ENCODE measurements at regions of chr10 and their contacts with region 1.

Region 1: DNA sequence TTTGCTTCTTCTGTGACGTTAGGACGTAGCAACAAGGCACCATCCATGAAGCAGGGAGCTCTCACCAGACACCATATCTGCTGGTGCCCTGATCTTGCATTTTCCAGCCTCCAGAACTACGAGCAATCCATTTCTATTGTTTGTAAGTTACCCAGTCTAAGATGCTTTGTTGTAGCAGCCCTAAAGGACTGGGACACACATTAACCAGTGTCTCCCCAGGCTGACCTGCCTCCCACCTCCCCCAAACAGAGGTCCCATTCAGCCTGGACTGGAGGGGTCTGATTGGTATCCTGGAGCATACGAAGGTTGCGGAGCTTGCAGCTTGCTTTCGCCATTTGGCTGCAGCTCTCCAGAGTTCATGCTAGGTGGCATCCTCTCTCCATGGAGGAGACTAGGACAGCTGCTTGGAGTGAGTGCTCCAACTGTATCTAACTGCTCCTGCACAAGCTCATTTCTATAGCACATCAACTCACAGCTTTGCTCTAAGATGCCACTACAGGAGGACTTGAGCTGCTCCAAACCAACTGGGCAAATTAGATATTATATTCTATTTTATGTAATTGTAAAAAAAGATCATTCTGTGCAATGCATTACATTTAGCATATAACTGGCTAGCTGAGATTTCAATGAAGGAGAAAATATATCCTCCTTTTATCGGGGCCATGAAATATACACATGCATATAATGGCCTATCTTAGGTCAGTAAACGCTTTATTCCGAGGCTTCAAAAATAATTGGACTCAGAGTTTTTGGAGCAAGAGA is 8.0 kb upstream of the GRK5 start:
- DNase-seq: peak; percentile 68
- ATAC-seq: peak; percentile 85
- H3K4me3 Mint-ChIP-seq: no peak overlapping the region
- H3K27ac Mint-ChIP-seq: no peak overlapping the region
- H3K4me1 Mint-ChIP-seq: peaks cover 24% of the 10 kb centered on the region
- H3K27me3 Mint-ChIP-seq: no peaks in the 10 kb centered on the region

Region 2: DNA sequence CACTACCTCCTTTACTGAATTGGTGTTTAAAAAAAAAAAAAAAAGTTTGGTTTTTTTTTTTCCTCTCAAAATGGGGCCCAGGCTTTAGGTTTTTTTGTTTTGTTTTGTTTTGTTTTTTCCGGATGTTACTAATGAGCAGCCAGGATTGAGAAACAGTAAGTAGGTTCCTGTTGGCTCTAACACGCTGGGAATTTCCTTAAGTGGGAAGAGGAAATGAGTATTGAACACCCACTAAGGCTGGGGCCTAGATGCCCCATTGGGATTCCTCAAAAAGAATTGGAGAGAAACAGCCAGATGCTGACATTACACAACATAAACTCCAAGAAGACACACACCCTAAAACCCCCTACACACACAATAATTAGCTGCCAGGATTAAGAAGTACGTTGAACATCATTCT is 272.1 kb before region 1 on chr10:
- CTCF ChIA-PET with region 1: no interaction called
- POLR2A ChIA-PET with region 1: no interaction called
- DNase-seq: no peak
- ATAC-seq: no peak
- H3K4me3 Mint-ChIP-seq: no peak overlapping the region
- H3K27ac Mint-ChIP-seq: no peak overlapping the region
- H3K4me1 Mint-ChIP-seq: peaks cover 10% of the 10 kb centered on the region
- H3K27me3 Mint-ChIP-seq: peaks cover 11% of the 10 kb centered on the region

Region 3: GRCh38 chr10:119049361-119049760 is 150.1 kb before region 1 on chr10:
- CTCF ChIA-PET with region 1: no interaction called
- POLR2A ChIA-PET with region 1: no interaction called
- DNase-seq: no peak
- ATAC-seq: no peak
- H3K4me3 Mint-ChIP-seq: no peak overlapping the region
- H3K27ac Mint-ChIP-seq: no peak overlapping the region
- H3K4me1 Mint-ChIP-seq: peaks cover 3% of the 10 kb centered on the region
- H3K27me3 Mint-ChIP-seq: no peaks in the 10 kb centered on the region

Region 4: GRCh38 chr10:119120413-119120867 is 79.0 kb before region 1 on chr10:
- CTCF ChIA-PET with region 1: no interaction called
- POLR2A ChIA-PET with region 1: no interaction called
- DNase-seq: no peak
- ATAC-seq: peak; percentile 80
- H3K4me3 Mint-ChIP-seq: no peak overlapping the region
- H3K27ac Mint-ChIP-seq: peak overlapping the region; percentile 56
- H3K4me1 Mint-ChIP-seq: peaks cover 12% of the 10 kb centered on the region
- H3K27me3 Mint-ChIP-seq: no peaks in the 10 kb centered on the region

Region 5: GRCh38 chr10:119159332-119159731 is 40.1 kb before region 1 on chr10:
- CTCF ChIA-PET with region 1: no interaction called
- POLR2A ChIA-PET with region 1: no interaction called
- DNase-seq: no peak
- ATAC-seq: no peak
- H3K4me3 Mint-ChIP-seq: no peak overlapping the region
- H3K27ac Mint-ChIP-seq: no peak overlapping the region
- H3K4me1 Mint-ChIP-seq: peaks cover 28% of the 10 kb centered on the region
- H3K27me3 Mint-ChIP-seq: no peaks in the 10 kb centered on the region

Region 6: DNA sequence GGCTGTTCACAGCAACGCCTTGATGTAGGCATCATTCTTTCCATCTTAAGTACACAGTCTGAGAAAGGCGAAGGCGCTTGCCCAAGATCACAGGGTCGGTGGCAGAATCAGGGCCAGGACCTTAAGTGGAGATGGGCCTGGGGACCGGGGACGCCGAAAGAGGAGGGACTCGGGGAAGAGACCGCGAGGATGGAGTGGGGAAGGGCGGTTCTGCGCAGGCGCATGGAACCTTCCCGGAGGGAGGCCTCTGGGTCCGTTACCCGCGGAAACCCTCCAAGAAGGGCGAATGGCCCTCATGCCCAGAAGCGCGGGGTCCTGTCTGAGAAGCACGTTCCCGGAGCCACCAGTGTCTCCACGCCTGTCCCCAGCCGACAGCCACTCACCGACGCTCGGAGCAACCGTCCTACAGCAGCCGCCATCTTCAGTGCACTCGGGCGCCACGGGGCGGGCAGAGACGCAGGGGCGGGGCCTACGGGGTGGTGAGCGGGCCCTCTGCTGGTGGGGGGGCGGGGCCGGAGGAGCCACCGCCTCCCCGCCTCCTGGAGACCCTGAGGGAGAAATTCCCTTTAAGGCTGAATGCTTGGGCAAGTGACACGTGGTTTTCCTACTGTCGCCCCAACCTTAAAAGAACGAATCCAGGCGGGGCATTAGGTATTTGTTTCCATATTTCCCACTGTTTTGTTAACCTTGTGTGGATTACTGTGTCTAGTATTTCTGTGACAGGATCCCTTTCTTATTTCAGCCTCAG is 20.9 kb before region 1 on chr10 and contains the start of gene PRDX3:
- CTCF ChIA-PET with region 1: interaction called, 15 read pairs
- POLR2A ChIA-PET with region 1: interaction called, 6 read pairs
- DNase-seq: peak; percentile 96
- ATAC-seq: peak; percentile 99
- H3K4me3 Mint-ChIP-seq: peak within 1 kb of the TSS; percentile 87
- H3K27ac Mint-ChIP-seq: peak within 1 kb of the TSS; percentile 91
- H3K4me1 Mint-ChIP-seq: peaks cover 31% of the 10 kb centered on the region
- H3K27me3 Mint-ChIP-seq: no peaks in the 10 kb centered on the region
- total RNA-seq, gene PRDX3: 135 to 136 TPM

Region 7: GRCh38 chr10:119416855-119417254 is 217.4 kb after region 1 on chr10:
- CTCF ChIA-PET with region 1: interaction called, 66 read pairs
- POLR2A ChIA-PET with region 1: no interaction called
- DNase-seq: peak; percentile 78
- ATAC-seq: peak; percentile 89
- H3K4me3 Mint-ChIP-seq: no peak overlapping the region
- H3K27ac Mint-ChIP-seq: no peak overlapping the region
- H3K4me1 Mint-ChIP-seq: no peaks in the 10 kb centered on the region
- H3K27me3 Mint-ChIP-seq: no peaks in the 10 kb centered on the region

Region 8: GRCh38 chr10:119445311-119445934 is 246.0 kb after region 1 on chr10:
- CTCF ChIA-PET with region 1: interaction called, 69 read pairs
- POLR2A ChIA-PET with region 1: no interaction called
- DNase-seq: peak; percentile 89
- ATAC-seq: peak; percentile 85
- H3K4me3 Mint-ChIP-seq: no peak overlapping the region
- H3K27ac Mint-ChIP-seq: peak overlapping the region; percentile 77
- H3K4me1 Mint-ChIP-seq: peaks cover 20% of the 10 kb centered on the region
- H3K27me3 Mint-ChIP-seq: no peaks in the 10 kb centered on the region

Region 9: GRCh38 chr10:119542988-119543813 is 343.8 kb after region 1 on chr10:
- CTCF ChIA-PET with region 1: interaction called, 32 read pairs
- POLR2A ChIA-PET with region 1: no interaction called
- DNase-seq: peak; percentile 78
- ATAC-seq: peak; percentile 37
- H3K4me3 Mint-ChIP-seq: peak overlapping the region; percentile 78
- H3K27ac Mint-ChIP-seq: peak overlapping the region; percentile 86
- H3K4me1 Mint-ChIP-seq: peaks cover 38% of the 10 kb centered on the region
- H3K27me3 Mint-ChIP-seq: peaks cover 14% of the 10 kb centered on the region

Measured in activated CD8-positive, alpha-beta T cell treated with anti-CD3 and anti-CD28 coated beads, Interleukin-2, amount 10 ng/mL, durations not matched to agents 7 days and 5 days (primary cell).